Activated T-helper 2 cell treated with anti-CD3 and anti-CD28 coated beads, Interferon-gamma antibody, Interleukin-2, Interleukin-4, amounts not matched to agents 10 μg/mL and 5 μg/mL and 100 μg/mL, durations not matched to agents 14 hours and 24 hours and 36 hours (primary cell): ENCODE measurements at regions of chr12 and their contacts with region 1.

Region 1: GRCh38 chr12:123713398-123713797 is 1.2 kb downstream of the ATP6V0A2 start:
- DNase-seq: no peak
- H3K4me3 Mint-ChIP-seq: peak overlapping the region; percentile 89
- H3K27ac Mint-ChIP-seq: peak overlapping the region; percentile 88
- H3K4me1 Mint-ChIP-seq: peaks cover 34% of the 10 kb centered on the region
- H3K27me3 Mint-ChIP-seq: no peaks in the 10 kb centered on the region

Region 2: DNA sequence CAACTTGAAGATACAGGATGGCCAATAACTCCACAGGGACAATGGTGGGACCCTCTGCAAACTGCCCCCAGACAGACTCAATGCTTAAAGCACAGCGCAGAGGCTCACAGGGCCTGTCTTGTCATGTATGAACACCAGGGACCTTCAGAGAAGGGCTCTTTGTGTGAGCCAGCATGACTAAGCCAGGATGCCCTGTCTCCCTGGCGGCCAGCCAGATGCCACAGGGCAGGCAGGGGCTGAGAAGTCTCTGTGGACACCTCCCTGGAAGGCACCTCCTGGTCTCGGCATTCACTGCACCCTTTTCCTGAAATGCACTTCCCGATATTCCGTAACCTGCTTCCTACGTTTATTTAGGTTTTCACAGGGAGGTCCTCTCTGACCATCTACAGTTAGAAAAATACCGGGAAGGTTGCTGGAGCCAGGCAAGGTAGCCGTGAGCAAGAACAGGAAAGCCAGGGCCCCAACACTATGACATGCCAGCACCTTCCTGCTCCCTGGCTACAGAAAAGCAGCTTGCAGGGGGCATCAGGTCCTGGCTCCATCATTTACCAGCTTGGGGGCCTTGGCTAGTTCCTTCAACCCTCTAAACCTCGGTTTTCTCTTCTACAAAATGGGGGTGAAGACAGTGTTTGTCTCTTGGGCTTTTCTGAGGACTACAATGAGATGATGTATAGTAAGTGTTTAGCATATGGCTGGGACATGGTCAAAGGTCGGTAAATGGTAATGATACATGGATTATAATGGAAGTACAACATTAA is 627.5 kb before region 1 on chr12:
- intact Hi-C with region 1: no loop called
- DNase-seq: no peak
- H3K4me3 Mint-ChIP-seq: no peak overlapping the region
- H3K27ac Mint-ChIP-seq: no peak overlapping the region
- H3K4me1 Mint-ChIP-seq: peaks cover 5% of the 10 kb centered on the region
- H3K27me3 Mint-ChIP-seq: no peaks in the 10 kb centered on the region

Region 3: GRCh38 chr12:123365025-123365917 is 348.1 kb before region 1 on chr12:
- intact Hi-C with region 1: loop called (anchors 5 kb)
- DNase-seq: peak; percentile 97
- H3K4me3 Mint-ChIP-seq: peak overlapping the region; percentile 82
- H3K27ac Mint-ChIP-seq: peak overlapping the region; percentile 93
- H3K4me1 Mint-ChIP-seq: peaks cover 8% of the 10 kb centered on the region
- H3K27me3 Mint-ChIP-seq: no peaks in the 10 kb centered on the region

Region 4: GRCh38 chr12:123633379-123634141 is 79.8 kb before region 1 on chr12 and contains the starts of genes EIF2B1 and GTF2H3:
- intact Hi-C with region 1: loop called (anchors 1 kb)
- DNase-seq: peak; percentile 96
- H3K4me3 Mint-ChIP-seq: peak within 1 kb of the TSS; percentile 95
- H3K27ac Mint-ChIP-seq: peak within 1 kb of the TSS; percentile 95
- H3K4me1 Mint-ChIP-seq: peaks cover 16% of the 10 kb centered on the region
- H3K27me3 Mint-ChIP-seq: no peaks in the 10 kb centered on the region
- total RNA-seq, gene EIF2B1: 65.8 and 66.0 TPM in 2 replicates
- total RNA-seq, gene GTF2H3: 53.2 and 65.4 TPM in 2 replicates

Region 5: GRCh38 chr12:123741937-123742572 is 28.7 kb after region 1 on chr12:
- intact Hi-C with region 1: loop called (anchors 1 kb)
- DNase-seq: peak; percentile 20
- H3K4me3 Mint-ChIP-seq: peak overlapping the region; percentile 57
- H3K27ac Mint-ChIP-seq: peak overlapping the region; percentile 94
- H3K4me1 Mint-ChIP-seq: peaks cover 39% of the 10 kb centered on the region
- H3K27me3 Mint-ChIP-seq: no peaks in the 10 kb centered on the region

Region 6: DNA sequence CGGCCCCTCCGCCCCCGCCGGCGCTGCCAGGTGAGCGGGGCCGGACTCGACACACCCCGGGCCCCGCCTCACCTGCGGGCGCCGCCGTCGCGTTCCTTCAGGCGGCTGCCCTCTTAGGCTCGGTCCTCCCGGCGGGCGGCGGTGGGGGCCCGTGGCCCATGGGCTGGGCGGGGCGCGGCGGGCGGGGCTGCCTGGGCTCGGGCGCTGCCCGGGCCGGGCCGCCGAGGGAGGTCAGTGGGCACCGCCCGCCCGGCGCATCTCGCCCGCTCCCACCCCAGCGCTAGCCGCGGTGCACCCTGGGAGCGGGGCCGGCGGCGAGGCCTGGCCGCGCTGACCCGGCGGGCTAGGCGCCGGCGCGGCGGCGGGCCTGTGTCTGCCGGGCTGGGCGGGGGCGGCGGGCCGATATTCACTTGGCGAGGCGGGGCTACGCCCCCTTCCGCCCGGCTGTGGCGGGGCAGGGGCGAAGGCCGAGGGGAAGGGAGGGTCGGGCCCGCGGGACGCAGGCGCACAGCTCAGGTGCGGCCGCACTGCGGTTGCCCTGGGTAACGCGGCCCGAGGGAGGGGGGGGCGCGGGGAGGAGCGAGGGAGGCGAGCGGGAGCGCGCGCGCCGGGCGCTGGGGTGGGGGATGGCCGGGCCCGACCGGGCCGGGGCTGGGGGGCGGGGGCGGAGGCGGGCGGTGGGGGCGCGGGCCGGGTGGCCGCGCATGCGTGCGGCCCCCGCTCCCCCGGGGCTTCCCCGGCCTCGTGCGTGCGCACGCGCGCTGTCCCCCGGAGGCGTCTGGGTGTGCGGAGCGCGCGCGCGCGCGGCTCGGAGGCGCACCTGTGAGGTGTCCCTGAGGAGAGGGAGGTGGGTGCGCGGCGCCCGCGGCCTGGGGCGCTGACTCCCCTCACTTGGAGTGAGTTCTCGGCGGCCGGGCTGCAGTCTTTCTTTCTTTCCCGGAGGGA is 259.3 kb after region 1 on chr12 and contains the starts of genes CCDC92 and ZNF664:
- intact Hi-C with region 1: loop called (anchors 5 kb)
- DNase-seq: peak; percentile 91
- H3K4me3 Mint-ChIP-seq: peak within 1 kb of the TSS; percentile 96
- H3K27ac Mint-ChIP-seq: peak within 1 kb of the TSS; percentile 74
- H3K4me1 Mint-ChIP-seq: peaks cover 29% of the 10 kb centered on the region
- H3K27me3 Mint-ChIP-seq: peaks cover 2% of the 10 kb centered on the region
- total RNA-seq, gene CCDC92: 11.8 and 12.8 TPM in 2 replicates
- total RNA-seq, gene ZNF664: 63.3 and 66.2 TPM in 2 replicates

Region 7: GRCh38 chr12:124917135-124917840 is 1203.9 kb after region 1 on chr12:
- intact Hi-C with region 1: loop called (anchors 2 kb)
- DNase-seq: peak; percentile 93
- H3K4me3 Mint-ChIP-seq: peak overlapping the region; percentile 86
- H3K27ac Mint-ChIP-seq: peak overlapping the region; percentile 98
- H3K4me1 Mint-ChIP-seq: peaks cover 69% of the 10 kb centered on the region
- H3K27me3 Mint-ChIP-seq: no peaks in the 10 kb centered on the region